PC-3 (cell line): ENCODE measurements at regions of chr11 and their contacts with region 1.

Region 1: DNA sequence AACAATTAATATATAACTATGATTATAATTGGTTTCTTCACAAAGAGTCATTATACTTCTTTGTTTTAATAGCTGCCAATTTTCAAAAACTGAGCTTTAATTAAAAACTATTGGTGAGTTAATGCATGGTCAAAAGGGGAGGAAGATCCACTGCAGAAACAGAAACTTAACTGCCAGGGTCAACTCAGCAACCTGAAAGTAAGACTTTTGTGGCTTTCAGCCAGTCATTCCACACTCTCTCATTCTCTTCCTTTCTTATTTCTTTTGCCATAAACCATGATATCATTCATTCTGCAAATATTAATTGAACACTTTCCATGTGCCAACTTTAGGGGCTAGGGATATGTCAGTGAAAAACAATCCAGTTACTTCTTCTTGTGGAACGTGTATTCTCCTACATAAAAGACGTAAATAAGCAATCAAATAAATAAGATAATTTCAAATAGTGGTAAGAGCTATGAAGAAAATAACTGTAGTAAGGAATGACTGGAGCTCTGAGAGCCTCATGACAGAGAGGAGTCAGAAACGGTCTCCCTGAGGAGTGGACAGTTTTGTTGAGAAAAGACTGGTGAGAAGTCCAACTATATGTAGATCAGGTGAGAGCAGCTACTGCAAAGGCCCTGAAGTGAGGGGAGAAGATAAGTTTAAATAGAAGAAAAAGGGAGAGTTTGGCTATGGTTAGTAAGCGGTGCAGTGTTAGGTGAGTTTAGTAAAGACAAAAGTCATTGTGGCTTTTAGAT is 130.5 kb downstream of the GRIA4 start:
- DNase-seq: no peak
- ATAC-seq: no peak
- H3K4me3 ChIP-seq: no peak overlapping the region
- H3K27ac ChIP-seq: no peak overlapping the region
- H3K4me1 ChIP-seq: peaks cover 21% of the 10 kb centered on the region
- H3K27me3 ChIP-seq: no peaks in the 10 kb centered on the region
- CTCF ChIP-seq: no peak

Region 2: GRCh38 chr11:105144887-105145286 is 595.4 kb before region 1 on chr11:
- CTCF ChIA-PET with region 1: no interaction called
- POLR2A ChIA-PET with region 1: no interaction called
- intact Hi-C with region 1: loop called (anchors 10 kb)
- DNase-seq: peak; percentile 91
- ATAC-seq: peak; percentile 99
- H3K4me3 ChIP-seq: peak overlapping the region; percentile 4; the same call in 1 of the 2 replicates
- H3K27ac ChIP-seq: peak overlapping the region; percentile 45
- H3K4me1 ChIP-seq: peaks cover 16% of the 10 kb centered on the region
- H3K27me3 ChIP-seq: no peaks in the 10 kb centered on the region
- CTCF ChIP-seq: no peak

Region 3: DNA sequence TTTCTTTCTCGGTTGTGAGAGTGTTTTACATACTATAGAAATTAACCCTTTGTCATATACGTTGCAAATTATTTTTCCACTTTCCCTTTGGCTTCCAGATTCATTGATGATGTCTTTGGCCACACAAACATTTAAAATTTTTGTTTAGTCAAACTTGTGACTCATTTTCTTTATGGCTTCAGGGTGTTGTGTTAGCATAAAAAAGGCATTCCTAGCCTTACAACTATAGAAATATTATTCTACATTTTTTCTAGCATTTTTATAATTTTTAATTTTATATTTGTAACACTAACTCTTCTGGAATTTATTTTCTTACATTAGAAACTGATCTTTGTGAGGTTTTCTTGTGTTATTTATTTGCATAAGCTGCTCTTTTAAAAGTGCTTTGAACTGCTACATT is 118.3 kb before region 1 on chr11:
- CTCF ChIA-PET with region 1: no interaction called
- POLR2A ChIA-PET with region 1: no interaction called
- intact Hi-C with region 1: loop called (anchors 5 kb)
- DNase-seq: peak; percentile 52
- ATAC-seq: peak; percentile 60
- H3K4me3 ChIP-seq: no peak overlapping the region
- H3K27ac ChIP-seq: no peak overlapping the region
- H3K4me1 ChIP-seq: no peaks in the 10 kb centered on the region
- H3K27me3 ChIP-seq: no peaks in the 10 kb centered on the region
- CTCF ChIP-seq: no peak

Region 4: GRCh38 chr11:105705786-105706530 is 34.4 kb before region 1 on chr11:
- CTCF ChIA-PET with region 1: no interaction called
- POLR2A ChIA-PET with region 1: no interaction called
- intact Hi-C with region 1: loop called (anchors 1 kb)
- DNase-seq: no peak
- ATAC-seq: no peak
- H3K4me3 ChIP-seq: no peak overlapping the region
- H3K27ac ChIP-seq: no peak overlapping the region
- H3K4me1 ChIP-seq: peaks cover 9% of the 10 kb centered on the region
- H3K27me3 ChIP-seq: no peaks in the 10 kb centered on the region
- CTCF ChIP-seq: no peak

Region 5: DNA sequence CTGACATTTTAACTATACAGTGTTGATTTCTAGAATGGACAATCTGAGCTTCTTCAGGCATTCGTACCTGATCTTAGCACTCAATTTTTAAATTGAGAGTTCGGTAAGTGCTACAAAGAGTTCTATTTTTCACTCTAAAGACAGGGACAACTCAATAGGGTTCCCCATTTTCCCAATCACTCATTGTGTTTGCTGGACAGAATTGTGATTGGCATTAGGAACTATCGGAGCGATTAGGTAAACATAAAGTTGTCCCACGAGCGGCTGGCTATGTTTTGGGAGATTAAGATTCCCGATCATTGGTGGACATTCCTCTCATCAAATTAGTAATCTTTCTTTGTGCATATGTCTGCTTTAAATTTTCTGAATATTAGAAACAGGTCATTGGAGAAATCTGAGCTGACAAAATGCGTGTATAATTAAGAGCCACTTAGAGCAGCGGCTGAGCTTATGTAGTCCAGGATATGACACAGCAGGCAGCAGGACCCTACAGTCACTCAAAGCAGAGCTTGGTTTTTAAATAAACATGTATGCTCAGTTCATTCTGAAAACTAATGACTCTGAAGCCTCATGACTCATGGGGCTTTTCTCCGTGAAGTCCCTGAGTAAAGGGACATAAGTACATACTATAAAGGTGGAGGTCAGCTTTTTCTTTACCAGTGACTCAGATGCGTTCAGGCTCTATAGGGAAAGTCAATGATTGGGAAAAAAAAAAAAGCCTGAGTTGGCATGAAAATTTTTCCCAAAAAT is 21.1 kb before region 1 on chr11:
- CTCF ChIA-PET with region 1: no interaction called
- POLR2A ChIA-PET with region 1: interaction called, 3 read pairs
- intact Hi-C with region 1: loop called (anchors 1 kb)
- DNase-seq: peak; percentile 99
- ATAC-seq: peak; percentile 100
- H3K4me3 ChIP-seq: no peak overlapping the region
- H3K27ac ChIP-seq: peak overlapping the region; percentile 80
- H3K4me1 ChIP-seq: peaks cover 16% of the 10 kb centered on the region
- H3K27me3 ChIP-seq: no peaks in the 10 kb centered on the region
- CTCF ChIP-seq: no peak

Region 6: DNA sequence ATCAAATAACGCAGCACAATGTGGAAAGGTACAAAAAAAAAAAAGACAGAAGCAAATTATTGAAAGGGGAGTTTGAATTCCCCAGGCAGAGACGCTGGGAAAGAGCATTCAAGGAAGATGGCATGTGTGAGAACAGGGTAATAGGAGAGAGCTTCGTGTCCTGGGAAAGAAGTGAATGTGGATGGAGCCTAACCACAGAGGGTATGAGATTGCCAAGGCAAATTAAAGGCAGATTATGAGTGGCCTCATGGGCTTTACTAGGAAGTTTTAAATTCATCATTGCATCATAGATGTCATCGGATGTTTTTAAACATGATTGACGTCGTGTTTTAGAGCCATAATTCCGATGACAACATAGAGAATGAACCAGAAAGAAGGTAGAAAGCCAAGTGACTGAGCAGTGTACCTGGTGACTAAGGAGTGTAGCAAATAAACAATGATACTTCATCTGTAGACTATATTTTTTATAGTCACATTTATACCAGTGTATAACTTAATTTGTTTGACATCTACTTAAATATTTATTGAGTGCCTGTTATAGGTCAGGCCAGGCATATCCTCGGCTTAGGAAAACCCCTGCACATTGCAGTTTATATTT is 130.3 kb after region 1 on chr11:
- CTCF ChIA-PET with region 1: no interaction called
- POLR2A ChIA-PET with region 1: no interaction called
- intact Hi-C with region 1: no loop called
- DNase-seq: peak; percentile 31
- ATAC-seq: peak; percentile 96
- H3K4me3 ChIP-seq: no peak overlapping the region
- H3K27ac ChIP-seq: no peak overlapping the region
- H3K4me1 ChIP-seq: no peaks in the 10 kb centered on the region
- H3K27me3 ChIP-seq: 0 out of 2 replicates have a peak, but pooled peaks cover 6% of the 10 kb centered on the region
- CTCF ChIP-seq: no peak